Spleen (tissue), 13 donors: ENCODE measurements at regions of chr10 and their contacts with region 1.

Region 1: DNA sequence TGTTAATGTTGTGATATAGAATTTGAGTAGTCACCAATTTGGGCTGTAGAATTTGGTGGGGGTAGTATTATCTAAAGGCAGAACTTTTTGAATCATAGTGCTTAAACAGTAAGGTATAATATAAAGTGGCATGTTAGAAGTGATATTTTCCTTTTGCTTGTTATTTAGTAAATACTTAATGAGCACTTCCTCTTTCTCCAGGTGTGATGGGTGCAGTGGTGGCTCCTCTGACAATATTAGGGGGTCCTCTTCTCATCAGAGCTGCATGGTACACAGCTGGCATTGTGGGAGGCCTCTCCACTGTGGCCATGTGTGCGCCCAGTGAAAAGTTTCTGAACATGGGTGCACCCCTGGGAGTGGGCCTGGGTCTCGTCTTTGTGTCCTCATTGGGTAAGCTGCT is 10.5 kb downstream of the GHITM start:
- DNase-seq: no peak
- H3K4me3 ChIP-seq: no peak overlapping the region
- H3K27ac ChIP-seq: no peak overlapping the region
- H3K4me1 ChIP-seq: peaks cover 0 to 10% (median 0%) of the 10 kb centered on the region in 6 donors
- H3K27me3 ChIP-seq: no peaks in the 10 kb centered on the region
- CTCF ChIP-seq: no peak
- POLR2A ChIP-seq: no peak

Region 2: GRCh38 chr10:83706952-83707582 is 442.8 kb before region 1 on chr10:
- intact Hi-C with region 1: no loop called
- DNase-seq: no peak
- H3K4me3 ChIP-seq: no peak overlapping the region
- H3K27ac ChIP-seq: no peak overlapping the region
- H3K4me1 ChIP-seq: no peaks in the 10 kb centered on the region
- H3K27me3 ChIP-seq: no peaks in the 10 kb centered on the region
- CTCF ChIP-seq: no peak
- POLR2A ChIP-seq: no peak

Region 3: DNA sequence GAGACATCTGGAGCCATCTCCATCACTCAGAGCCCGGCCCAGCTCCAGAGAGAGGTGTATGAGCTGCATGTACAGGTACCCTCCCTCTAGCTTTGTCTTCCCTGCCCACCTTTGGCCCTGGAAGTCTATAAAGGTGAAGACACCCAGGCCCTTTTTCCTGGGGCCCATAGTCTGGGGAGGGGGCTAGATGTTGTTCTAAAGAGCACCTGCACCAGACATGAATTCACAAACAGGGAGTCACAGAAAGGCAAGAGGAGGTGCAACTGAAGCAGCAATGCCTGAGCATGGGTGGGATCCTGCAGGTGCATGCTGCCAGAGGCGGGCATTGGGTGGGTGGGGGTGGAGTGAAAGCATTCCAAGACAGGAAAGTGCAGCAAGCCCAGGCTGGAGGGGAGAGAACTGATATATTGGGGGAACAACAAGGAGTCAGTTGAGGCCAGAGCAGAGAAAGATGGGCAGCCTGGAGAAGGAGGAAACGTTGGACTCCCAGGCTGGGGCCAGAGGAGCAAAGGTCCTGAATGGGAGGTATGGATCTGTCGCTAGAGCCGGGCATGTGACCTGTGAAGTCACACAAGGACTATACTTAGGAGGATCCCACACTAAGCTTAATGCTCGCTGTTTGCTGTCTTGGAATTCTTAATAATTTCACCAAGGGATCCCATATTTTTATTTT is 56.1 kb after region 1 on chr10:
- intact Hi-C with region 1: loop called (anchors 2 kb)
- DNase-seq: no peak
- H3K4me3 ChIP-seq: no peak overlapping the region
- H3K27ac ChIP-seq: no peak overlapping the region
- H3K4me1 ChIP-seq: peaks cover 0 to 7% (median 0%) of the 10 kb centered on the region in 6 donors
- H3K27me3 ChIP-seq: peaks cover 0 to 5% (median 0%) of the 10 kb centered on the region in 7 donors
- CTCF ChIP-seq: peak in 1 of 11 experiments; percentile 14
- POLR2A ChIP-seq: no peak